ENCODE measurements at regions of chr2 and their contacts with region 1.

Region 1: GRCh38 chr2:177618255-177619253 is 226.0 kb downstream of the AGPS start:
- DNase-seq: peak; percentile 97
- ATAC-seq: peak; percentile 88
- H3K4me3 ChIP-seq: peak overlapping the region; percentile 62 to 98 (median 93)
- H3K4me3 Mint-ChIP-seq: peak overlapping the region; percentile 98
- H3K27ac ChIP-seq: peak overlapping the region; percentile 91 to 100
- H3K27ac Mint-ChIP-seq: peak overlapping the region; percentile 100
- H3K4me1 ChIP-seq: peaks cover 9 to 10% of the 10 kb centered on the region in 2 donors
- H3K4me1 Mint-ChIP-seq: peaks cover 11% of the 10 kb centered on the region
- H3K27me3 ChIP-seq: peaks cover 0 to 2% (median 0%) of the 10 kb centered on the region in 4 experiments
- H3K27me3 Mint-ChIP-seq: no peaks in the 10 kb centered on the region
- CTCF ChIP-seq: no peak

Region 2: DNA sequence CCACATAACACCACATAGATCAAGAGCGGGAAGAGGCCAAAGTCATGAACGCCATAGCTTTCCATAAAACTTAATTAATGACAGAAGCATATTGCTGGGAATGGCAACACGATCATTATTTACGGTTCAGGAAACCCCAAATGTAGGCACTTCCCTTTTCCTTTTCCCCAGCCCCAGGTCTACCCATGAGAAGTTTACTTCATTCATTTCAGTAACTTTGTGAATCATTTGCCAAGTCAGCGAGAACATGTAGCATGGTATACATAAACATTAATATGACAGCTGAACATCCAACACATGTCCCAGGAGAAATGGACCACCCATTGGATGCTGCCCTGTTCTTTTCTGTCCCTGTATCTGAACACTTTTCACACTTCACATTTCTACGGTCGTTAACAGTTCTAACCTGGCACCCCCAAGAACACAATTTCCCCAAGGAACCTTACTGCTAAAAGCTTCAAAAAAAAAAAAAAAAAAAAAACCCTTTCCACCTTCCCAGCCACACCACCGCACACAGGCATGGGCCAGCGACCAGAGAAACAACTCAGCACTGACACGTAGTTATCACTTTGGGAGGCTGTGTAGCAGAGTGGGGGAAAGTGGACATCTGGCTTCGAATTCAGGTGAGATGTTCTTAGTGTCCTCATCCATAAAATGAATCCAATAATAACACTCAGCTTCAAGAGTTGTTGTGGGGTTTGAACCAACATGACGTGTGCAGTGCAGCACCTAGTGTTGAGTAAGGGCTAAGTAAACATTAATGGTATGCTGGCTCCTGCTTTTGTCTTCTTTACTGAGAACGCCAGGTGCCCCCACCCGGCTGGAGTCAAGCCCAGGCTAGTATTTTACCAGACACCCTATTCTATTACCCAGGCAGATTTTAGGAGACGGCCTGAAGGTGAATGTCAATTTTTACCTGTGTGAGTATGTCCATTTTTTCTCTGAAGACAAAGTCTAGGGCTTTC is 1988.0 kb before region 1 on chr2:
- CTCF ChIA-PET with region 1: no interaction called
- POLR2A ChIA-PET with region 1: no interaction called
- intact Hi-C with region 1: no loop called
- DNase-seq: no peak
- ATAC-seq: no peak
- H3K4me3 ChIP-seq: no peak overlapping the region
- H3K4me3 Mint-ChIP-seq: no peak overlapping the region
- H3K27ac ChIP-seq: no peak overlapping the region
- H3K27ac Mint-ChIP-seq: no peak overlapping the region
- H3K4me1 ChIP-seq: no peaks in the 10 kb centered on the region
- H3K4me1 Mint-ChIP-seq: no peaks in the 10 kb centered on the region
- H3K27me3 ChIP-seq: peaks cover 0 to 7% (median 0%) of the 10 kb centered on the region in 4 experiments
- H3K27me3 Mint-ChIP-seq: peaks cover 8% of the 10 kb centered on the region
- CTCF ChIP-seq: no peak

Region 3: GRCh38 chr2:177212106-177212890 is 406.3 kb before region 1 on chr2 and contains the start of gene HNRNPA3:
- CTCF ChIA-PET with region 1: no interaction called
- POLR2A ChIA-PET with region 1: no interaction called
- intact Hi-C with region 1: loop called (anchors 2 kb)
- DNase-seq: peak; percentile 100
- ATAC-seq: peak; percentile 86
- H3K4me3 ChIP-seq: peak within 1 kb of the TSS; percentile 81 to 97 (median 94)
- H3K4me3 Mint-ChIP-seq: peak within 1 kb of the TSS; percentile 91
- H3K27ac ChIP-seq: peak within 1 kb of the TSS; percentile 99 to 100
- H3K27ac Mint-ChIP-seq: peak within 1 kb of the TSS; percentile 98
- H3K4me1 ChIP-seq: peaks cover 32 to 37% of the 10 kb centered on the region in 2 donors
- H3K4me1 Mint-ChIP-seq: peaks cover 47% of the 10 kb centered on the region
- H3K27me3 ChIP-seq: no peaks in the 10 kb centered on the region
- H3K27me3 Mint-ChIP-seq: no peaks in the 10 kb centered on the region
- CTCF ChIP-seq: no peak
- total RNA-seq, gene HNRNPA3: 197 and 200 TPM in 2 replicates

Region 4: GRCh38 chr2:177392373-177393202 is 226.0 kb before region 1 on chr2 and contains the start of gene AGPS:
- CTCF ChIA-PET with region 1: no interaction called
- POLR2A ChIA-PET with region 1: no interaction called
- intact Hi-C with region 1: loop called (anchors 5 kb)
- DNase-seq: peak; percentile 66
- ATAC-seq: peak; percentile 91
- H3K4me3 ChIP-seq: peak within 1 kb of the TSS; percentile 70 to 83 (median 77)
- H3K4me3 Mint-ChIP-seq: peak within 1 kb of the TSS; percentile 91
- H3K27ac ChIP-seq: peak within 1 kb of the TSS in 1 of 2 donors; percentile 47
- H3K27ac Mint-ChIP-seq: peak within 1 kb of the TSS; percentile 87
- H3K4me1 ChIP-seq: peaks cover 19 to 28% of the 10 kb centered on the region in 2 donors
- H3K4me1 Mint-ChIP-seq: peaks cover 42% of the 10 kb centered on the region
- H3K27me3 ChIP-seq: no peaks in the 10 kb centered on the region
- H3K27me3 Mint-ChIP-seq: no peaks in the 10 kb centered on the region
- CTCF ChIP-seq: no peak
- total RNA-seq, gene AGPS: 23.2 and 25.5 TPM in 2 replicates

Region 5: GRCh38 chr2:177629357-177630024 is 10.9 kb after region 1 on chr2:
- CTCF ChIA-PET with region 1: no interaction called
- POLR2A ChIA-PET with region 1: no interaction called
- intact Hi-C with region 1: loop called (anchors 1 kb)
- DNase-seq: no peak
- ATAC-seq: no peak
- H3K4me3 ChIP-seq: no peak overlapping the region
- H3K4me3 Mint-ChIP-seq: no peak overlapping the region
- H3K27ac ChIP-seq: no peak overlapping the region
- H3K27ac Mint-ChIP-seq: no peak overlapping the region
- H3K4me1 ChIP-seq: no peaks in the 10 kb centered on the region
- H3K4me1 Mint-ChIP-seq: peaks cover 15% of the 10 kb centered on the region
- H3K27me3 ChIP-seq: no peaks in the 10 kb centered on the region
- H3K27me3 Mint-ChIP-seq: peaks cover 13% of the 10 kb centered on the region
- CTCF ChIP-seq: no peak

Region 6: DNA sequence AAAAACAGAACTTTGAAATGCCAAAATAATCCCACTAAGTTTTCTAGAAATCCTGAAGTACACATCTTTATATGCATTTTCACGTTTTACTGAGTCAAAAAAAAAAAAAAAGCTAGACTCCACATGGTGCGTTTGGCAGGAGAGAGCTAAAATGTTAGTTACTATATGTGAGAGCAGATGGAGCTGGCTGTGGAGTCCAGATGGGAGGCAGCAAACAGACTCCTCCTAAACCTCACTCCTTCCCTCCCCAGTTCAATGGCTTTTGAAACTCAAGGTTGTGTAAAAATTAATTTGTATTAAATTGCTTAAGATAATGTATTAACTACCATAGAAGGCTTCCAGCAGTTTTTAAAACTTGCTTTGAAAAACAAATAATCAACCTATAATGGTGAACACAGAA is 22.8 kb after region 1 on chr2:
- CTCF ChIA-PET with region 1: no interaction called
- POLR2A ChIA-PET with region 1: no interaction called
- intact Hi-C with region 1: no loop called
- DNase-seq: no peak
- ATAC-seq: no peak
- H3K4me3 ChIP-seq: no peak overlapping the region
- H3K4me3 Mint-ChIP-seq: no peak overlapping the region
- H3K27ac ChIP-seq: no peak overlapping the region
- H3K27ac Mint-ChIP-seq: no peak overlapping the region
- H3K4me1 ChIP-seq: no peaks in the 10 kb centered on the region
- H3K4me1 Mint-ChIP-seq: peaks cover 3% of the 10 kb centered on the region
- H3K27me3 ChIP-seq: no peaks in the 10 kb centered on the region
- H3K27me3 Mint-ChIP-seq: no peaks in the 10 kb centered on the region
- CTCF ChIP-seq: no peak

Measured in B cell (primary cell).